Naive thymus-derived CD4-positive, alpha-beta T cell (primary cell): ENCODE measurements at regions of chr6 and their contacts with region 1.

Region 1: DNA sequence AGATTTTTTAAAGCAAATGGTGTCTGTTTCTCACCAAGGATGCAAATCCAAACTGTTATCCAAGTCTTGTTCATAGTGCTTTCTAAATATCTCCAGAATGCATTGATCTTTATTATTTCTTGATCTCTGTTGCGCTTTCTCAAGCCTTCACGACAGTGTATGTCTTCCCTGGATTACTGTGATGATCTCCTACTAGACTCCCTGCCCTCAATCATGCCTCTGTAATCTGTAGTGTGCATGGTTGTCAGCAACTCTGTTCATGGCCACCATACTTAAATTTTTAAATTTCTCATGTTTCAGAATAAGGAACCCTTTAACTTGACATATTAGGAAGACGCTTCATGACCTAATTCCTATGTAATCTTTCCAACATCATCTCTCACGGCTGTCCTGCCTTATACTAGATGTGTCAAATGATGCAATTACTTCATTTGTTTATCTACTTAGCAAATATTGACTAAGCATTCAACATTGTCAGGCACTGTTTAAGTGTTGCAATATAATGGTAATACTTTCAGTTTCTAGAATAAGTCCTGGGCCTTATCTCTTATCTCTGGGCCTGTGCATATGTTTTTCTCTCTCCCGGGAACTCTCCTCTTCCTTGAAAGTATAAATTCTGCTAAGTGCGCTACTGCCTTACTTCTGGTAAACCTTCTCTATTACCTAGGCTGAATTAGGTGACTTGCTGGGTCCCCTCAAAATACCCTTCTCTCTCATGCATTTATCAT is 25.6 kb upstream of the AHI1 start:
- DNase-seq: no peak
- ATAC-seq: peak; percentile 48
- H3K4me3 ChIP-seq: no peak overlapping the region
- H3K4me3 Mint-ChIP-seq: no peak overlapping the region
- H3K27ac ChIP-seq: no peak overlapping the region
- H3K27ac Mint-ChIP-seq: peak overlapping the region in 1 of 9 donors; percentile 50
- H3K4me1 ChIP-seq: no peaks in the 10 kb centered on the region
- H3K4me1 Mint-ChIP-seq: peaks cover 0 to 11% (median 0%) of the 10 kb centered on the region in 7 donors
- H3K27me3 ChIP-seq: no peaks in the 10 kb centered on the region
- H3K27me3 Mint-ChIP-seq: no peaks in the 10 kb centered on the region

Region 2: GRCh38 chr6:135750081-135750480 is 227.0 kb after region 1 on chr6:
- CTCF ChIA-PET with region 1: no interaction called
- POLR2A ChIA-PET with region 1: no interaction called
- intact Hi-C with region 1: no loop called
- DNase-seq: no peak
- ATAC-seq: no peak
- H3K4me3 ChIP-seq: no peak overlapping the region
- H3K4me3 Mint-ChIP-seq: no peak overlapping the region
- H3K27ac ChIP-seq: no peak overlapping the region
- H3K27ac Mint-ChIP-seq: no peak overlapping the region
- H3K4me1 ChIP-seq: no peaks in the 10 kb centered on the region
- H3K4me1 Mint-ChIP-seq: no peaks in the 10 kb centered on the region
- H3K27me3 ChIP-seq: no peaks in the 10 kb centered on the region
- H3K27me3 Mint-ChIP-seq: peaks cover 0 to 12% (median 0%) of the 10 kb centered on the region in 5 donors

Region 3: DNA sequence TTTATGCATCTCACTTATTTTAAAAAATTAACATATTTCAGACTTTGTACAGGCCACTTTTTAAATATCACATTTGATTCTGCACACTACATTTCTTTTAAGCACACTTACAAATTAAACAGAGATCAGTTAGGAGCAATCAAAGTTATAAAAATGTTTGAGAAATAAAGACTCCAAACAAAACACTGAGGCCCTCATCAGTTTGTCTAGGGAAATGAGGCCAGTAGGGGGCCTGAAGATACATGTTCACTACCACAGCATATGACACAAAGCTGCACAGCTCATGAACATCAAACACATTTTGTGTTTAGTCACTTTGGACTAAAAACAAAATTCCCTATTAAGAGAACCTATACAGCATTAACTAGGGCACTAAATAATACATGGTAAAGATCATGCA is 508.9 kb after region 1 on chr6:
- CTCF ChIA-PET with region 1: no interaction called
- POLR2A ChIA-PET with region 1: no interaction called
- intact Hi-C with region 1: loop called in 1 of 2 experiments (anchors 10 kb)
- DNase-seq: peak in 3 of 9 donors; percentile 6 to 7 (median 7)
- ATAC-seq: no peak
- H3K4me3 ChIP-seq: no peak overlapping the region
- H3K4me3 Mint-ChIP-seq: no peak overlapping the region
- H3K27ac ChIP-seq: no peak overlapping the region
- H3K27ac Mint-ChIP-seq: no peak overlapping the region
- H3K4me1 ChIP-seq: no peaks in the 10 kb centered on the region
- H3K4me1 Mint-ChIP-seq: peaks cover 0 to 7% (median under 1%) of the 10 kb centered on the region in 7 donors
- H3K27me3 ChIP-seq: no peaks in the 10 kb centered on the region
- H3K27me3 Mint-ChIP-seq: peaks cover 0 to 3% (median 0%) of the 10 kb centered on the region in 5 donors